Adrenal gland (tissue), 19 donors: ENCODE measurements at regions of chr2 and their contacts with region 1.

Region 1: GRCh38 chr2:16617282-16618261 is 48.1 kb downstream of the CYRIA start:
- DNase-seq: peak in 4 of 7 donors; percentile 52 to 68 (median 60)
- H3K4me3 ChIP-seq: no peak overlapping the region
- H3K27ac ChIP-seq: peak overlapping the region in 1 of 5 donors; percentile 69
- H3K4me1 ChIP-seq: peaks cover 7 to 42% of the 10 kb centered on the region in 2 donors
- H3K27me3 ChIP-seq: no peaks in the 10 kb centered on the region
- CTCF ChIP-seq: peak; percentile 12 to 67 (median 60)
- POLR2A ChIP-seq: no peak

Region 2: GRCh38 chr2:16750175-16750924 is 132.8 kb after region 1 on chr2:
- intact Hi-C with region 1: loop called (anchors 5 kb)
- DNase-seq: no peak
- H3K4me3 ChIP-seq: no peak overlapping the region
- H3K27ac ChIP-seq: no peak overlapping the region
- H3K4me1 ChIP-seq: no peaks in the 10 kb centered on the region
- H3K27me3 ChIP-seq: no peaks in the 10 kb centered on the region
- CTCF ChIP-seq: no peak
- POLR2A ChIP-seq: no peak

Region 3: DNA sequence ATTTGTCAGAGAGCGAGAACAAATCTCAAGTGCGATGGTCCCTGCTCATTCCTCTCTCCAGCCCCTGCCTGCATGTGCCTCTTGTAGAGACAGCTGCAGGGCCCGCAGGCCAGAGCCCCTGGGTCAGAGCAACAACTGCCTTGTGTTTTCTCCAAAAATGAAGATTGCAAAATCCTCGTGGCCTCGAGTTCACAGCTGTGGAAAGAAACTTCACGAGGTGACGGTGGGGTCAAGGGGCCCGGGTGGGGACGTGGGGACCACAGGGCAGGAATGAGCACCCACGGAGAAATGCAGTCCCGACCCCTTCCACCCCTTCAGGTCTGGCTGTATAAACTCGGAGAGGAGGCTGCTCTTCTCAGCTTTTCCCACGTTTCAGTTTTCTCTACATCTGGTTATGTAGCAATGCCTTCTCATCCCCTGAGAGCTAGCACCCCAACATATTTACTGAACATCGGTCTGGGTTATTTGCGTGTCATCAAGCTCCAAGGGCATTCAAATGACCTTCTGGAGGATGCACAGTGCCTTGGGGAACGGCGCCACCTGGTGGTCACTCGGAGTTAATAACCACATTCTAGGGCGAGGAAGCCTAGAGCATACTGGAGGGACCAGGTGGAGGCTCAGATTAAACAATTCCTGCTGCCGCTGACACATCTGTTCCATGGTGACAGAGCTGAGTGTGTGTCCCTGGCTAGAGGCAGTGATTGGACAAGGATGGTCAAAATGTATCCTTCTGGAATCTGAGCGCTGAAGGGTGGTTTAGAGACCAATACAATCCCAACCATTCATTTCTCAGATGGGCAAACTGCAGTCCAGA is 139.5 kb after region 1 on chr2:
- intact Hi-C with region 1: loop called (anchors 5 kb)
- DNase-seq: peak; percentile 66 to 93 (median 81)
- H3K4me3 ChIP-seq: no peak overlapping the region
- H3K27ac ChIP-seq: peak overlapping the region in 1 of 5 donors; percentile 10
- H3K4me1 ChIP-seq: peaks cover 5 to 14% of the 10 kb centered on the region in 2 donors
- H3K27me3 ChIP-seq: no peaks in the 10 kb centered on the region
- CTCF ChIP-seq: peak; percentile 94 to 98 (median 97)
- POLR2A ChIP-seq: no peak